ENCODE measurements at regions of chr7 and their contacts with region 1.

Region 1: GRCh38 chr7:23055582-23056178 is 41.8 kb upstream of the HYCC1 start:
- DNase-seq: peak in 1 of 2 donors; percentile 68
- H3K4me3 ChIP-seq: no peak overlapping the region
- H3K27ac ChIP-seq: no peak overlapping the region
- H3K4me1 ChIP-seq: no peaks in the 10 kb centered on the region
- H3K27me3 ChIP-seq: no peaks in the 10 kb centered on the region
- CTCF ChIP-seq: peak; percentile 74 to 96 (median 88)

Region 2: GRCh38 chr7:22822486-22823141 is 233.1 kb before region 1 on chr7 and contains the start of gene TOMM7:
- intact Hi-C with region 1: loop called (anchors 2 kb)
- DNase-seq: peak; percentile 40 to 91
- H3K4me3 ChIP-seq: peak within 1 kb of the TSS; percentile 74 to 86
- H3K27ac ChIP-seq: peak within 1 kb of the TSS; percentile 67 to 80
- H3K4me1 ChIP-seq: peaks cover 3 to 9% of the 10 kb centered on the region in 2 donors
- H3K27me3 ChIP-seq: no peaks in the 10 kb centered on the region
- CTCF ChIP-seq: peak; percentile 24 to 55 (median 54)
- total RNA-seq, gene TOMM7: 65.1 TPM

Region 3: DNA sequence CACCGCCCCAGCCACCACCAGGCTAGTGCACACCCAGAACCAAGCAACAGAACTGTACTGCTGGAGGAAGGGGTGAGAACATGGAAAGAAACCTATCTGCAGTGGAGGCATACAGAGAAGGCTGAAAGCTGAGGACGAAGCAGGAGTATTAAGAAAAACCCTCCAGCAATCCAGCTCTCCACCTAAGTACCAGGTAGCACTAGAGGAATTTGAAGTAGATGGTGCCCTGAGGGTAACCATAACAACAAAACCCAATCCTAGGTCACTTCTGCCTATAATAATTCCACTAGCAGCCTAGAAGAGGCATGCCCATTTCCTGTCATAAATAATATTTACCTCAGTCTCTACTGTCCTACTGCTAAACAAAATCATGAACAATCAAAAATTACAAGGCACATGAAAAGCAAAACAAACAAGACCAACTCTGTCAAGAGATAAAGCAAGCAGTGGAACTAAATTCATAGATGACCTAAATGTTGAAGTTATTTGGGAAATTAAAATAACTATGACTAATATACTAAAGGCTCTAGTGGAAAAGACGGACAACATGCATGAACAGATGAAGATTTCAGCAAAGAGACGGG is 92.8 kb before region 1 on chr7:
- intact Hi-C with region 1: loop called (anchors 5 kb)
- DNase-seq: no peak
- H3K4me3 ChIP-seq: no peak overlapping the region
- H3K27ac ChIP-seq: peak overlapping the region in 1 of 2 donors; percentile 28
- H3K4me1 ChIP-seq: peaks cover 0 to 5% of the 10 kb centered on the region in 2 donors
- H3K27me3 ChIP-seq: no peaks in the 10 kb centered on the region
- CTCF ChIP-seq: no peak

Region 4: DNA sequence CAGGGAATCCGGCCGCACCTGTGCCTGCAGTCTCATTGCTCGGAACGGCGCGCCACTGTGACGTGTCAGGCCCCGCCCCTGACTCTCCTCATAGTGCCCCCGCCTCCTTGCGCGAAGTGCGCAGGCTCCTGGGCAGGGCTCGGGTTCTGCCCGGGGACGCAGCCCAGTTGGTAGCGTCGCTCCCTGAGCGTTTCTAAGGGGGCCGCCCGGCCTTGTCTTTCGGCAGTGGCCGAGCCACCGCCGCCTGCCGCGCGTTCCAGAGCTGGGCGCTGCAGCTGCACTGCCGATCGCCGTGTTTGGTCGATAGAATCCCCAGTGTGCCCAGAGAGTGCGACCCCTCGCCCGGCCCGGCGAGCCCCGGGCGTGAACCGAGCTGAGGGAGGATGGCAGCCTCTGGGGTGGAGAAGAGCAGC is 50.0 kb after region 1 on chr7 and contains the start of gene KLHL7:
- intact Hi-C with region 1: no loop called
- DNase-seq: peak; percentile 87 to 99
- H3K4me3 ChIP-seq: peak within 1 kb of the TSS; percentile 88 to 96
- H3K27ac ChIP-seq: peak within 1 kb of the TSS; percentile 89 to 92
- H3K4me1 ChIP-seq: peaks cover 4 to 26% of the 10 kb centered on the region in 2 donors
- H3K27me3 ChIP-seq: no peaks in the 10 kb centered on the region
- CTCF ChIP-seq: no peak
- total RNA-seq, gene KLHL7: 1.2 TPM

Measured in ascending aorta (tissue), 2 donors.